Cardiac septum (tissue), 1 donor: ENCODE measurements at regions of chr10 and their contacts with region 1.

Region 1: GRCh38 chr10:43816351-43817321 is 168.0 kb upstream of the ZNF32 start:
- DNase-seq: no peak

Region 2: GRCh38 chr10:43863859-43864591 is 47.4 kb after region 1 on chr10:
- intact Hi-C with region 1: loop called (anchors 2 kb)
- DNase-seq: peak; percentile 78

Region 3: DNA sequence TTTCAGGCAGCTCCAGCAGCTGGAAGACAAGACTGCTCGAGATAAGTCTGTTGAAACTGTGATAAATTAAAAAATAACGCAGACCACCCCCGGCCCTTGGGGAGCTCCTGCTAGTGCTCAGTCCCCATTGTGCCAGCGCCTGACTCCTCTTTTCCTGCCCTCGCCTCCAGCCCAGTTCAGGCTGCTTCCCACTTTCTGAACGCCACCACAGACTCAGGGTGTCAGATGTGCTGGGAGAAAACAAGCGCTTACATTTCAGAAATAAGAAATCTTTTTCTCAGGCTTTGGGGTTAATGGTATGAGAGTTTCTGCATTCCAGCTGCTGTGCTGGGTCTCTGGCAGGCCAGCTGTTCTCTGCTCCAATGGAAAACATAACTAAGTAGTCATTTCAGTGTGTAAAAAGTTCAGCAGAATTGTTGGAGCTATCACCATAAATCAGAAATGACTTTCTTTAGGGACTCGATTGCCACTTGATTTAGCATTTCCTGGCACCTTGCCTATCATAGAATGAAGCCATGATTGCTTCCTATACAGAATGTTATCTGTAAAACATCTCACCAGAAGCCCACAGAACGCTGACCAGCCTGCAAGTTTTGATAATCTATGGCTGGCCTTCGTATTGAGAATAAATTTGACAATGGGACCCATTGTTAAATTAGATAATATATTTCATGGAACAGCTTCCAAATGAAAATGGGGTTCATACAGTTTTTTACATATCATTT is 89.0 kb after region 1 on chr10:
- intact Hi-C with region 1: loop called (anchors 5 kb)
- DNase-seq: peak; percentile 74

Region 4: DNA sequence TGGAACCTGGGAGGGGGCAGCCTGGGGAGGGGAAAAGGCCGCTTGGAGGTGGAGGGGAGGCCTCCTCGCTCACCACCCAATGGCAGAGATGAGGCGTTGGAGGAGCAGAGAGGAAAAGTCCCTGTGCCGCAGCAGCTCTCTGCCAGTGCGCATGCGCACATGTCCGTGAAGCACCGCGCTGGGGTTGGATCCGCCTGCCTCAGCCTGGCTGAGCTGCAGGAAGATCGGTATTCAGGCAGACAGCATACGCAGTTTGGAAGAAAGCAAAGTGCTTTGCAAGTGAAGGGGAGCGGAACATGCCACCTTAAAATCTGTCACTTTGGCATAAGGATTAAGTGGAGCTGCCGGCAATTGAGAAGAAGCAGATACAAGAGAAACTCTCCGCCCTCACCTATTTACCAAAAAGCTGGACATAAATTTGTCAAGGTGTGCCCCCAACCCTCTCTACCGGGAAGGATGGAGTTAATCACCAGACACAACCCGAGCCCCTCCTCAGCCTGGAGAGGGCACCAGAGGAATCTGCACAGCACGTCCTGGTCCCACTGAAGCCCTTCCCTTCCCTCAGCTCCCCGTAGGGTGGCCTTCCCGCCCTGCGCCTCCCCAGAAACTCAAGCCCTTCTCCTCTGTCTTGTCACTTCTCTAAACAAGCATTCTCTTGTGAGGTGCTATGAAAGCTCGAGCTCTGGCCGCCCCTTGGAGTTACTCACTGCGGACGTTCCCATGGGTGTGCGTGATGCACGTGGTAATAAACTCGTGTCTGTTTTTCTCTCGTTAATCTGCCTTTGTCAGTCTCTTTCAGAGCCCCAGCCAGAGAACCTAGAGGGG is 1062.3 kb after region 1 on chr10:
- intact Hi-C with region 1: loop called (anchors 10 kb)
- DNase-seq: peak; percentile 94